ENCODE measurements at regions of chr7 and their contacts with region 1.

Region 1: DNA sequence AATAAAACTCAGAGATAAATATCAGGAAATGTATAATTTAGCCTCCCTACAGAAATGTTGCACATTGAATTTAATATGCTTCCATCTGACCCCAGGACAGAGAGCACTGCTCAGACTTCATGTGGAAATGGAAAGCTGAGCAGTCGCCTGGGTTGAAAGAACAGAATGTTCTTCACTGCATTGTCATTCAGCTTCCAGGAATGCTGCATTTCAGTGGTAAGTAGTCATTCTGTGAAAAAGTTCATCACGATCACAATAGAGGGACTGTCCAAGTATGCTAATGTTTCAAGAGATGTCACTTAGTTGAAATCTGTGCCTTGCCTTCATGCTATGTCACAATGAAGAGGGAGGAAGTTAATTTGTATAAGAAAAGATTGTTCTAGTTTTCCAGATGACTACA is 147.3 kb downstream of the NRCAM start:
- DNase-seq: peak; percentile 34
- H3K4me3 Mint-ChIP-seq: no peak overlapping the region
- H3K27ac Mint-ChIP-seq: no peak overlapping the region
- H3K4me1 Mint-ChIP-seq: peaks cover 24% of the 10 kb centered on the region
- H3K27me3 Mint-ChIP-seq: peaks cover 3% of the 10 kb centered on the region

Region 2: DNA sequence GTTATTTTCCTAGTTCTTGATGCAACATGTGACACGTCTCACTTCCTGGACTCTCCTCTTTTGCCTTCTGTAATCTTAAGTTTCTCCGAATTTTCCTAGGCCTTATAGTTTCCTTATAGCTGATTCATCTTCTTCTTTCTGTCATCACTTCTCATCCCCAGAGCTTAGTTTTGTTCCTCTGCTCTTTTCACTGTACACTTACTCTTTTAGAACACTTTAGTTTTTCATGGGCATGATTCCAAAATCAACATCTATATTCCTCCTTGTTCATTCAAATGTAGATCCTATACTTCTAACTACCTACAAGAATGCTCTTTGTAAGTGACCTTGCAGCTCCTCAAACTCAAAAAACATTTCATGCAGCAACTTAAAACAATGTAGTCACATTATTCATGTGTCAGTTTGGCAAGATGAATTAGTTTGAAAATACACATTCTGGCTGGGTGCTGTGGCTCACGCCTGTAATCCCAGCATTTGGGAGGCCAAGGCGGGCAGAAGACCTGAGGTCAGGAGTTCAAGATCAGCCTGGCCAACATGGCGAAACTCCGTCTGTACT is 492.8 kb before region 1 on chr7:
- CTCF ChIA-PET with region 1: no interaction called
- intact Hi-C with region 1: loop called (anchors 2 kb)
- DNase-seq: no peak
- H3K4me3 Mint-ChIP-seq: no peak overlapping the region
- H3K27ac Mint-ChIP-seq: peak overlapping the region; percentile 1
- H3K4me1 Mint-ChIP-seq: peaks cover 32% of the 10 kb centered on the region
- H3K27me3 Mint-ChIP-seq: peaks cover 2% of the 10 kb centered on the region

Region 3: DNA sequence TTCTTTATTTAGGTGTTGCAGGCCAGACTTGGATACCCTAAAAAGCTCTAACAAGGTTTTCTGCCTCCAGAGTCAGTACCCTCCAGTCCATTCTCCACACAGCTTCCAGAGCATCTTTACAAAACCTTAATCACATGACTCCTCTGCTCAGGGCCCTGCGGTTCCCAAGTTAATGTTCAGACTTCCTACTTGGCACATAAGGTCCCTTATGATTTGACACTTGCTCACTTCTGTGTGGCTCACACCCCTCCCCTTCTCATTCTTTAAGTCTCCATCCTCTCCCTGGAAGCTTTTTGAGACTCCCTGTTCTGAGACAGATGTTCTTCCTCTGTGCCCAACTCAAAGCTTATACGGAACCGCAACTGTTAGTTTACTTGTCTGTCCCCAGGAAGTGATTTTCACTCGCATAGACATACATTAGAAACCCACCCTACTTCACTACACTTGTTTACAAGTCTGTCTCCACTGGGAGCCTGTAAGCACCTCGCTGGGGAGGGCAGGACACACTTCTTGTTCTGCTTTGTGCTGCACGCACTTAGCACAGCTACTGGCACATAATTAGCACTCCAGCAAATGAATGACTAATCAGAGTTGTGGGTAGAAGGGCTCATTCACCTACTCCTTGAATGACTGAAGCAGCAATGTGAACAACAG is 24.4 kb before region 1 on chr7:
- CTCF ChIA-PET with region 1: interaction called, 3 read pairs
- intact Hi-C with region 1: loop called (anchors 1 kb)
- DNase-seq: peak; percentile 32
- H3K4me3 Mint-ChIP-seq: no peak overlapping the region
- H3K27ac Mint-ChIP-seq: peak overlapping the region; percentile 4
- H3K4me1 Mint-ChIP-seq: peaks cover 8% of the 10 kb centered on the region
- H3K27me3 Mint-ChIP-seq: peaks cover 21% of the 10 kb centered on the region

Region 4: DNA sequence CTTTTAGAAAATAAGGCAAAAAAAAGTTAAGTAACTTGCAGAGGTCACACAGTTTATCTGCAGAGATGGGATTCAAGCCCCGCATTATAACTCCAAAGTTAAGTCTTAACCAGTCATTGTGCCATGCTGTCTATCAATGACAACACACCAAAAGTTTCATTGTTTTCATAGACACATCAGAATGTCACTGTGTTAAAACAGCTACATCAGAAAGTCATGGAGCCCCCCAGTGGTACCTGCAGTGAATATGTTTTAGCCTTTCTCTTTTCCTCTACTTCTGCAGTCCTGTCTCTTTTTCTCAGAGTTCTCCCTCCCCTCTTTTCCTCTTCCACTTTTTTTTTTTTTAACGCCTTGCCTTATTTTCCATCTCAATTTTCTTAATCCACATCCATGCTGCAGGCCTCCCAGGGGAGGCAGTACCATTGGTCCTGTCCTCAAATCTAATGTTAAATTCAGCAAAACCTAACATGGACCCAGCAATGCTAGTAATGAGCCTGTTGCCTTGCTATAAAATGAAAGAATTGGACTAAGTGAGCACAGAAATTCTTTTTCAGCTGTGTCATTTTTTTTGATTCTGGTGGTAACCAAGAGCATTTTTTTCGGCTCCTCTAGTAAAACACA is 151.1 kb after region 1 on chr7:
- CTCF ChIA-PET with region 1: interaction called, 4 read pairs
- intact Hi-C with region 1: loop called (anchors 2 kb)
- DNase-seq: peak; percentile 56
- H3K4me3 Mint-ChIP-seq: no peak overlapping the region
- H3K27ac Mint-ChIP-seq: no peak overlapping the region
- H3K4me1 Mint-ChIP-seq: peaks cover 30% of the 10 kb centered on the region
- H3K27me3 Mint-ChIP-seq: peaks cover 22% of the 10 kb centered on the region

Region 5: GRCh38 chr7:108569381-108570145 is 260.7 kb after region 1 on chr7 and contains the starts of genes DNAJB9 and THAP5:
- CTCF ChIA-PET with region 1: no interaction called
- intact Hi-C with region 1: loop called (anchors 5 kb)
- DNase-seq: peak; percentile 99
- H3K4me3 Mint-ChIP-seq: peak within 1 kb of the TSS; percentile 98
- H3K27ac Mint-ChIP-seq: peak within 1 kb of the TSS; percentile 99
- H3K4me1 Mint-ChIP-seq: peaks cover 49% of the 10 kb centered on the region
- H3K27me3 Mint-ChIP-seq: no peaks in the 10 kb centered on the region
- total RNA-seq, gene DNAJB9: 8.2 TPM
- total RNA-seq, gene THAP5: 22.7 to 24.8 TPM